ENCODE measurements at regions of chr1 and their contacts with region 1.

Region 1: GRCh38 chr1:234978397-234979295 is 150.0 kb downstream of the TOMM20 start:
- DNase-seq: peak; percentile 58 to 68
- ATAC-seq: peak in 1 of 2 donors; percentile 16
- H3K4me3 ChIP-seq: no peak overlapping the region
- H3K27ac ChIP-seq: peak overlapping the region; percentile 83 to 91 (median 89)
- H3K4me1 ChIP-seq: peaks cover 46 to 68% of the 10 kb centered on the region in 2 donors
- H3K27me3 ChIP-seq: no peaks in the 10 kb centered on the region
- CTCF ChIP-seq: no peak
- POLR2A ChIP-seq: peak; percentile 7 to 23

Region 2: GRCh38 chr1:234599617-234600417 is 378.8 kb before region 1 on chr1:
- in situ Hi-C with region 1: loop called in 2 of 4 experiments (anchors 5 to 10 kb)
- intact Hi-C with region 1: no loop called
- DNase-seq: peak; percentile 84 to 94
- ATAC-seq: peak; percentile 66 to 69
- H3K4me3 ChIP-seq: peak overlapping the region; percentile 55 to 60 (median 56)
- H3K27ac ChIP-seq: peak overlapping the region; percentile 98
- H3K4me1 ChIP-seq: peaks cover 56 to 57% of the 10 kb centered on the region in 2 donors
- H3K27me3 ChIP-seq: no peaks in the 10 kb centered on the region
- CTCF ChIP-seq: peak in 1 of 5 experiments; percentile 46
- POLR2A ChIP-seq: peak; percentile 76 to 89

Region 3: GRCh38 chr1:234893725-234894630 is 84.7 kb before region 1 on chr1:
- in situ Hi-C with region 1: loop called in 1 of 4 experiments (anchors 25 kb)
- intact Hi-C with region 1: no loop called
- DNase-seq: no peak
- ATAC-seq: no peak
- H3K4me3 ChIP-seq: no peak overlapping the region
- H3K27ac ChIP-seq: peak overlapping the region; percentile 64 to 75 (median 66)
- H3K4me1 ChIP-seq: peaks cover 37 to 39% of the 10 kb centered on the region in 2 donors
- H3K27me3 ChIP-seq: no peaks in the 10 kb centered on the region
- CTCF ChIP-seq: no peak
- POLR2A ChIP-seq: no peak

Measured in gastrocnemius medialis (tissue), 4 donors.